Activated CD4-positive, alpha-beta memory T cell treated with anti-CD3 and anti-CD28 coated beads for 36 hours (primary cell): ENCODE measurements at regions of chr9 and their contacts with region 1.

Region 1: GRCh38 chr9:92764988-92765936 is 629 bp upstream of the BICD2 start:
- DNase-seq: peak; percentile 99
- H3K4me3 Mint-ChIP-seq: peak overlapping the region; percentile 82
- H3K27ac Mint-ChIP-seq: peak overlapping the region; percentile 79
- H3K4me1 Mint-ChIP-seq: peaks cover 48% of the 10 kb centered on the region
- H3K27me3 Mint-ChIP-seq: no peaks in the 10 kb centered on the region

Region 2: GRCh38 chr9:92299116-92299515 is 466.1 kb before region 1 on chr9:
- CTCF ChIA-PET with region 1: no interaction called
- POLR2A ChIA-PET with region 1: no interaction called
- intact Hi-C with region 1: no loop called
- DNase-seq: no peak
- H3K4me3 Mint-ChIP-seq: no peak overlapping the region
- H3K27ac Mint-ChIP-seq: peak overlapping the region; percentile 58
- H3K4me1 Mint-ChIP-seq: peaks cover 36% of the 10 kb centered on the region
- H3K27me3 Mint-ChIP-seq: no peaks in the 10 kb centered on the region

Region 3: GRCh38 chr9:92325269-92325990 is 439.8 kb before region 1 on chr9 and contains the starts of genes CENPP and NOL8:
- CTCF ChIA-PET with region 1: interaction called, 3 read pairs
- POLR2A ChIA-PET with region 1: no interaction called
- intact Hi-C with region 1: loop called (anchors 2 kb)
- DNase-seq: peak; percentile 90
- H3K4me3 Mint-ChIP-seq: peak within 1 kb of the TSS; percentile 90
- H3K27ac Mint-ChIP-seq: peak within 1 kb of the TSS; percentile 94
- H3K4me1 Mint-ChIP-seq: peaks cover 36% of the 10 kb centered on the region
- H3K27me3 Mint-ChIP-seq: no peaks in the 10 kb centered on the region
- total RNA-seq, gene CENPP: 21.8 to 23.5 TPM
- total RNA-seq, gene NOL8: 45.6 to 47.1 TPM

Region 4: DNA sequence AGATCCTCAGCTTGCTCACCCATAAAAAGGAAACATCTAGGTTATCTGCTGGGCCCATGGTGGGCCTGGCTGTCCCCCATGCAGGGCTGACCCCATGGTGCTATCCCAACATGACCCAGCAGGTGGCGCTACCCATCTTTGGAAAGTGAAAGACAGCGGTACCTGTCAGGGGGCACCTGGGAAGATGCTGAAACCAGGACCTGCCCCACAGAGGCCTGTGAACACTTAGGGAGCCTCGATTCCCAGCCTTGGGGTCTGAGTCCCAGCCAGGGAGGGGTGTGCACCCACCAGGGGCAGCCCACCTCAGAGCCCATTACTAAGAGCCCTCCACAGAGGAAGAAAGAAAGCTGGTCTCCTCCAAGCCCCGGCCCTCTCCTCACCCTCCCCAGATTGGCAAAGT is 48.7 kb before region 1 on chr9:
- CTCF ChIA-PET with region 1: interaction called, 6 read pairs
- POLR2A ChIA-PET with region 1: interaction called, 5 read pairs
- intact Hi-C with region 1: loop called (anchors 2 kb)
- DNase-seq: peak; percentile 85
- H3K4me3 Mint-ChIP-seq: no peak overlapping the region
- H3K27ac Mint-ChIP-seq: no peak overlapping the region
- H3K4me1 Mint-ChIP-seq: peaks cover 15% of the 10 kb centered on the region
- H3K27me3 Mint-ChIP-seq: no peaks in the 10 kb centered on the region

Region 5: GRCh38 chr9:92808726-92809451 is 43.6 kb after region 1 on chr9:
- CTCF ChIA-PET with region 1: interaction called, 5 read pairs
- POLR2A ChIA-PET with region 1: interaction called, 4 read pairs
- intact Hi-C with region 1: loop called (anchors 1 kb)
- DNase-seq: peak; percentile 76
- H3K4me3 Mint-ChIP-seq: peak overlapping the region; percentile 77
- H3K27ac Mint-ChIP-seq: no peak overlapping the region
- H3K4me1 Mint-ChIP-seq: peaks cover 15% of the 10 kb centered on the region
- H3K27me3 Mint-ChIP-seq: peaks cover 53% of the 10 kb centered on the region

Region 6: DNA sequence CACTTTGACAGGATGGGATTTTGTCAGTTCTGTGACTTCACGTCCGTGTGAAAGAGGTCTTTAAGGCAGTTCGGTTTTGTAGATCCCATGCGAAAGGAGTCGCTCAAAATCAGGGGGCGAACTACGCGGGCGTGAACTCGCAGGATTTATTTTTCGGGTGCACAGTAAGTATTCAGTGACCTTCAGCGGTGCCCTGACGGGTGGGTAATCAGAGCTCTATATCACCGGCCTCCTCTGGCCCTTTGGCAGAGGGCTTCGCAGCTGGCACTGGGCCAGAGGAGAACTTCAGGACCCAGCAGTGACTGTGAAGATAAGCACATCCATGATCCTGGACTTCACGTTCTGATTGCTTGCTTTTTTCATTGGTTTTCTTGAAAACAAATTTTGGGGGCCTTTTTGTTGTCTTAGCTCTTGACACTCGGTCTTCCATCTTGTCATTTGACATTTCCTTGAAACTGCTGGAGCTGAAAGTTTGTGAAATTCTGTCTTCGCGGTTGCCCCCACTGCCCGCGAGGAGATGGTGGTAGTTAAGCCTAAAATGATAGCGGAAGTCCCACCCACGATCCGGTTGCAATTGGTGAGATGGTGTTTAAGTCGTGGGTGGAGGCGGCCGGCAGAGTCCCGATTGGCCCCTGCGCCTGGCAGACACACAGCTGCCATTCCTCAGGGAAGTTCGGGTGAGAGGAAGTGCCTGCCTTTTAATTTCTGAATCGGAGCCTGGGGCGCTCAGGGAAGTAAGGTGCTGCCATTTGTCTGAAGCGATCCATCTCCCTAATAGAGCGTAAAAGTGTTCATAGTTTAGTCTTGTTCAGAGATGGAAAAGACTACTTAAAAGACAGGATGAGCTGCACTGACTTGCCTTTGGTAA is 688.0 kb after region 1 on chr9 and contains the start of gene FAM120AOS:
- CTCF ChIA-PET with region 1: no interaction called
- POLR2A ChIA-PET with region 1: no interaction called
- intact Hi-C with region 1: loop called (anchors 10 kb)
- DNase-seq: peak; percentile 92
- H3K4me3 Mint-ChIP-seq: peak within 1 kb of the TSS; percentile 91
- H3K27ac Mint-ChIP-seq: peak within 1 kb of the TSS; percentile 93
- H3K4me1 Mint-ChIP-seq: peaks cover 44% of the 10 kb centered on the region
- H3K27me3 Mint-ChIP-seq: no peaks in the 10 kb centered on the region
- total RNA-seq, gene FAM120AOS: 35.4 to 36.4 TPM